CD8-positive, alpha-beta T cell (primary cell): ENCODE measurements at regions of chr17 and their contacts with region 1.

Region 1: DNA sequence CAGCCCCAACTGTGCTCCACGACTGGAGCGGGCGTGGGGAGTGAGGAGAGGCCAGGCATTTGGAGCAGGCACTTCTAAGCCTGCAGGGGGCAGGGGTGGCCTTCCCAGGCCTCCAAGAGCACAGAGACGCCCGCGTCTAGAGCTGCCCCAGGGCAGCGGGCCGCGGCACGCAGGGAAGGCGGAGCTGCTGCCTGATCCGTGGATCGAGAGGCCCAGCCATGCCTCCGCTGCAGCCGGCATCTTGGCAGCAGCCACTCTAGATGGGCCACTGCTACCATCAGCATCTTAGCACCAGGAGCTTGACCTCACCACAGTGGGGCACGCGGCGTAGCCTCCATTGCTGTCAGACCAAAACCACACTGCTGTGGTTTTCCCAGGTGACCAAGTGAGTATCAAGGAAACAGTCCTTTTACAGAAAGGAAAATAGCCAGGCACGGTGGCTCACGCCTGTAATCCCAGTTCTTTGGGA is 20.4 kb upstream of the WDR45B start:
- DNase-seq: peak in 5 of 9 experiments; percentile 36 to 62 (median 52)
- ATAC-seq: peak; percentile 82
- H3K4me3 ChIP-seq: no peak overlapping the region
- H3K4me3 Mint-ChIP-seq: no peak overlapping the region
- H3K27ac ChIP-seq: no peak overlapping the region
- H3K27ac Mint-ChIP-seq: no peak overlapping the region
- H3K4me1 ChIP-seq: no peaks in the 10 kb centered on the region
- H3K4me1 Mint-ChIP-seq: peaks cover 6% of the 10 kb centered on the region
- H3K27me3 ChIP-seq: no peaks in the 10 kb centered on the region
- H3K27me3 Mint-ChIP-seq: no peaks in the 10 kb centered on the region
- CTCF ChIP-seq: no peak

Region 2: DNA sequence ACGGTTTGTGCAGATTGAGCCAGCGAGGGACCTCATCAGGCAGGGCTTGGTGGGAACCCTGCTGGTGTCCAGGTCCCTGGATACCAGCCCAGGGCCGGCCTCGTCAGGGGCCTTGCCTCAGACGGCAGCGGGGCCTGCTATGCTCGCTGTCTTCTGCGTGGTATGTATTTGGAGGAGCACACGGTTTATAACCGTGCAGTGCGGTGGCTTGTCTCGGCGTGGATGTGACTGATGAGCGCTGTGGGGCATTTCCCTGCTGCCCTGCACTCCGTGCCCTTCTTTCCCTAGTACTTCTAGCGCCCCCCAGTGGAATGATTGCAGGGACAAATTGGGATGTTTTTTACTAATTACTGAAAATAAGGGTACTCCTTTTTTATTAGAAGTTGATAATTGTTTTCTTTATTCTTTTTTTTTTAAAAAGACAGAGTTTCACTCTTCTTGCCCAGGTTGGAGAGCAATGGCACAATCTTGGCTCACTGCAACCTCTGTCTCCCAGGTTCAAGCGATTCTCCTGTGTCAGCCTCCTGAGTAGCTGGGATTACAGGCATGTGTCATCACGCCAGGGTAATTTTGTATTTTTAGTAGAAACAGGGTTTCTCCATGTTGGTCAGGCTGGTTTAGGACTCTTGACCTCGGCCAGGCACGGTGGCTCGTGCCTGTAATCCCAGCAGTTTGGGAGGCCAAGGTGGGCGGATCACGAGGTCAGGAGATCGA is 98.5 kb after region 1 on chr17:
- CTCF ChIA-PET with region 1: interaction called, 7 read pairs
- POLR2A ChIA-PET with region 1: no interaction called
- intact Hi-C with region 1: loop called in 1 of 2 experiments (anchors 1 kb)
- DNase-seq: peak in 5 of 9 experiments; percentile 39 to 54 (median 46)
- ATAC-seq: no peak
- H3K4me3 ChIP-seq: no peak overlapping the region
- H3K4me3 Mint-ChIP-seq: no peak overlapping the region
- H3K27ac ChIP-seq: no peak overlapping the region
- H3K27ac Mint-ChIP-seq: no peak overlapping the region
- H3K4me1 ChIP-seq: no peaks in the 10 kb centered on the region
- H3K4me1 Mint-ChIP-seq: peaks cover 17% of the 10 kb centered on the region
- H3K27me3 ChIP-seq: no peaks in the 10 kb centered on the region
- H3K27me3 Mint-ChIP-seq: no peaks in the 10 kb centered on the region
- CTCF ChIP-seq: peak; percentile 26

Region 3: DNA sequence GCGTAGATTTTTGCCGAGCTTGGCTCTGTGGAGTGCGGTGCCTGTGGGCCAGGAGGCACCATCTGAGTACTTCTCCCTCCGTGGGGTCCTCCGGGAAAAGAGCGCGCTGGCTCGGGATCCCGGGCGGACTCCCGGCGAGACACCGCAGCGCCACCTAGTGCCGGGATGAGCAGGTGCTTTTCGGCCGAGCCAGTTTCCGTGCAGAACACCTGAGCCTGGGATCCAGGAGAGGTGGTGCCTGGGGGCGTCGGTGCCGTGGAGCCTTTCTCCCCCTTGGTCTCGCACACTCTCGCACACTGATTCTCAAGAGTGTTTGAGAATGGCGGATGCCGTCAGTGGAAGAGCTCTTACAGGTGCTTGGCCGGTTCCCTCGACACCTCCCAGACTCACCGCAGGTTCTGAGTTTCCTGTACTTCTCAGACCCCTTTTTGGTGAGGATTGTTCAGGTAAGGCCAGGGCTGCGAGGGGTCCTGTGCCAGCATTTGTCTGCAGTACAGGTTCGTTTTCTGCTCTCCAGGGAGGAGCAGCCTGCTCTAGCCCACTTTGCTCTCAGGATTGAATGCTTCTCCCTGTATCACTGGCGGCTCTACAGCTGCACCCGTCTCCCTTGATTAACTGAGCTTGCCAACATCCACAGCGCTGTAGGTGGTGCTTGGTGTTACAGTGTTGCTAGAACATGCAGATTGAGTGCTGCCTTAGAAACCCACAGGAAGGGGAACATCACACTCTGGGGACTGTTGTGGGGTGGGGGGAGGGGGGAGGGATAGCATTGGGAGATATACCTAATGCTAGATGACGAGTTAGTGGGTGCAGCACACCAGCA is 106.5 kb after region 1 on chr17:
- CTCF ChIA-PET with region 1: interaction called, 7 read pairs
- POLR2A ChIA-PET with region 1: no interaction called
- intact Hi-C with region 1: loop called (anchors 2 kb)
- DNase-seq: peak in 8 of 9 experiments; percentile 17 to 82 (median 54)
- ATAC-seq: peak; percentile 89
- H3K4me3 ChIP-seq: peak overlapping the region in 1 of 2 experiments; percentile 42
- H3K4me3 Mint-ChIP-seq: peak overlapping the region; percentile 64
- H3K27ac ChIP-seq: peak overlapping the region in 1 of 2 experiments; percentile 59
- H3K27ac Mint-ChIP-seq: peak overlapping the region; percentile 82
- H3K4me1 ChIP-seq: peaks cover 19% of the 10 kb centered on the region
- H3K4me1 Mint-ChIP-seq: peaks cover 28% of the 10 kb centered on the region
- H3K27me3 ChIP-seq: no peaks in the 10 kb centered on the region
- H3K27me3 Mint-ChIP-seq: no peaks in the 10 kb centered on the region
- CTCF ChIP-seq: peak; percentile 69